ENCODE measurements at regions of chr2 and their contacts with region 1.

Region 1: DNA sequence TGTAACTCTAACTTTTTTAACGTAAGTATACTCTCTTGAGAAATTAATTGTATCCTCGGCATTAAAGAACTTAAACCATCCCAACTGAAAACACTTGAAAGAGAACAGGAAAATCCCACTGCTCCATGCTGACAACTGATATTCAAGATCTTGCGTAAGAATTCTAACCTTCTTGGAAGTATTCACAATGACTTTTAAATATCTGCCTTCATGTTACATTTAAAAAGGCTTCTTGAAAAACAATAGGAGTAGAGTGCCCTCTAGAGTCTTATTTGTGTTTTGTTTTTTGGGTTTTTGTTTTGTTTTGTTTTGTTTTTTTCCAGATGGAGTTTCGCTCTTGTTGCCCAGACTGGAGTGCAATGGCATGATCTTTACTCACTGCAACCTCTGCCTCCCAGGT is 65.4 kb upstream of the DNAJC10 start:
- DNase-seq: no peak
- H3K4me3 ChIP-seq: no peak overlapping the region
- H3K27ac ChIP-seq: no peak overlapping the region
- H3K4me1 ChIP-seq: peaks cover 0 to 3% (median 0%) of the 10 kb centered on the region in 4 experiments; a peak in 1 of 7 replicates
- H3K27me3 ChIP-seq: no peaks in the 10 kb centered on the region
- CTCF ChIP-seq: peak in 2 of 3 experiments; percentile 27 to 29; a peak in 2 of 4 replicates
- EP300 ChIP-seq: no peak
- POLR2A ChIP-seq: no peak
- RAD21 ChIP-seq: peak; percentile 60 to 61

Region 2: DNA sequence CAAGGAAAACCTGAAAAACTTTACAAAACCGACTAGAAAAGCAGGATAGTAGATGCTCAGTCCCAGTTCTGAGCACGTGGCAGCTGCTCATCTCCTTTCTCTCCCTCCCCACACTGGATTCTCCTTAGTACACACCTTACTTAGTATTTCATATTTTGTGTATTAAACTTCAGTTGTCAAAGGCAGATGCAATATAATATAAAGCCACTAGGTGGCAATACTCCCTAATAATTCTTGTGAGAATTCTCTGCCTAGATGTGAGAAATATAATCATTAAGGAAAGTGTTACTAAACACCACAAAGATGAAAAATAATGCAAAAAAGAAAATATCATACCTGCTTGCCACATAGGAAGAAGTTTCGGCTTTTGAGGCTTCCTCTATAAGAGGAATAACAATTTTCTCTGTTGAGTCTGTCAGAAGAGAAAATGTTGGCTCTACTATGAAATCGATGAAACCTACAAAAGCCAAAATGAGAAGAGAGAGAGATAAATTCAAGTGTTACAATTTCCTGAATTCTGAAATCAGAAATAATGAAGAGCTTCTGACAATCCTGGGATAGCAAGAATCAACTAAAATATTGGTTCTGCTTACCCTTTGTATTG is 464.5 kb before region 1 on chr2:
- CTCF ChIA-PET with region 1: interaction called, 93 read pairs
- POLR2A ChIA-PET with region 1: no interaction called
- DNase-seq: no peak
- H3K4me3 ChIP-seq: no peak overlapping the region
- H3K27ac ChIP-seq: no peak overlapping the region
- H3K4me1 ChIP-seq: no peaks in the 10 kb centered on the region
- H3K27me3 ChIP-seq: no peaks in the 10 kb centered on the region
- CTCF ChIP-seq: peak in 2 of 3 experiments; percentile 27 to 37; a peak in 2 of 4 replicates
- EP300 ChIP-seq: no peak
- POLR2A ChIP-seq: no peak
- RAD21 ChIP-seq: peak; percentile 65 to 81

Region 3: DNA sequence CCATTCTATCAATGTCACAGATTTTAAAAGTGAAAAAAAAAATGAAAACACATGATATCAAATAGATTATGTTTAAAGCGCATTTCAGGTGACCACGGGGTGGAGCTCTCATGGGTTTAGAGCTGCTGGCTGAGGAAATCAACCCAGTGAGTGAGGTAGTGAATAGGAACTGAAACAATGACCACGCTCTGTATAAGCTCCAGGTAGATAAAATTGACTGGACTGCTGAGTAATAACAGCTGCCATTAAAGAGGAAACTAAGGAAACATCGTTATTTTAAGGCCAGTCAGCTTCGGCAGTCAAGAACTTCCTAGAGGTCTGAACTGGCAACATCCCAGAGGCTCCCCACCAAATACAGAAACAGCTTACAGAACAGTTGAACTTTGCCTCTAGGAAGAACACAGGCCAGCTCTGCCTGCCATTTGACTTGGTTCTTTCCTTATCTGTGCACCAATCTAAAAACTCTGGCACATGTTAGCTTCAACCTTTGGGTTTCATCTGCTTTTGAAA is 409.8 kb before region 1 on chr2:
- CTCF ChIA-PET with region 1: interaction called, 38 read pairs
- POLR2A ChIA-PET with region 1: no interaction called
- DNase-seq: peak in 1 of 2 experiments; percentile 10
- H3K4me3 ChIP-seq: no peak overlapping the region
- H3K27ac ChIP-seq: no peak overlapping the region
- H3K4me1 ChIP-seq: peaks cover 2 to 8% (median 5%) of the 10 kb centered on the region in 4 experiments; a peak in 3 of 7 replicates
- H3K27me3 ChIP-seq: no peaks in the 10 kb centered on the region
- CTCF ChIP-seq: peak; percentile 38 to 52 (median 51)
- EP300 ChIP-seq: no peak
- POLR2A ChIP-seq: no peak
- RAD21 ChIP-seq: peak; percentile 56 to 57

Region 4: GRCh38 chr2:182559623-182560022 is 91.1 kb before region 1 on chr2:
- CTCF ChIA-PET with region 1: no interaction called
- POLR2A ChIA-PET with region 1: no interaction called
- DNase-seq: no peak
- H3K4me3 ChIP-seq: no peak overlapping the region
- H3K27ac ChIP-seq: no peak overlapping the region
- H3K4me1 ChIP-seq: no peaks in the 10 kb centered on the region
- H3K27me3 ChIP-seq: no peaks in the 10 kb centered on the region
- CTCF ChIP-seq: no peak
- EP300 ChIP-seq: no peak
- POLR2A ChIP-seq: no peak
- RAD21 ChIP-seq: no peak

Region 5: DNA sequence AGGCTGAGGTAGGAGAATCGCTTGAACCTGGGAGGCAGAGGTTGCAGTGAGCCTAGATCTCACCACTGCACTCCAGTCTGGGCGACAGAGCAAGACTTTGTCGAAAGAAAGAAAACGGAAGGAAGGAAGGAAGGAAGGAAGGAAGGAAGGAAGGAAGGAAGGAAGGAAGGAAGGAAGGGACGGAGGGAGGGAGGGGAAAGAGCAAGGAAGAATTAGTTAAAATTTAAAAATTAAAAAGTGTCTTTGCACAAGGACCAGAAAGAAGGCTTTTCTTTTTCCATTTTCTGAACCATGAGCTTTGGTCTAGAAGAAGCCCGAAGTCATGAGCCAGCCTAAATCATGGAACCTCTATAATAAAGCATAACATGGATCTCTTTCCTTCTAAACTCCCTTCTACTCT is 72.9 kb before region 1 on chr2:
- CTCF ChIA-PET with region 1: interaction called, 10 read pairs
- POLR2A ChIA-PET with region 1: no interaction called
- DNase-seq: no peak
- H3K4me3 ChIP-seq: no peak overlapping the region
- H3K27ac ChIP-seq: no peak overlapping the region
- H3K4me1 ChIP-seq: no peaks in the 10 kb centered on the region
- H3K27me3 ChIP-seq: no peaks in the 10 kb centered on the region
- CTCF ChIP-seq: no peak
- EP300 ChIP-seq: no peak
- POLR2A ChIP-seq: no peak
- RAD21 ChIP-seq: no peak

Region 6: DNA sequence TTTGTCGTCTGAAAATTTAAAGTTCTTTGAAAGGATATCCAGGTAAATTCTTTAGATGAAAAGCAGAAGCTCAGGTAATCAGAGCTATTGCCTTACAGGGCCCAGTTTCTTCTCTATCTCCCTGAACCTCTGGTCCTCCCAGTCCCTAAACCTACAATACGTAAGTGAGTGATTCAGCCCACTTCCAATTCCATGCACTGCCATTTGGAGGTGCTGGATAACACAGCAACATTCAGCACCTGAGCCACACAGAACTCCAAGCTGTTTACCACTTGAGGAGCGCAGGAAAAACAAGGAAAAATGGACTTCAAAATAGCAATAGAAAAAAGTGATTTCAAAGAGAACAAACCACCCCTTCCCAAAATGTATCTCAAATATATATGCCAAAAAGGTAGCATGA is 39.7 kb before region 1 on chr2:
- CTCF ChIA-PET with region 1: interaction called, 17 read pairs
- POLR2A ChIA-PET with region 1: no interaction called
- DNase-seq: peak in 1 of 2 experiments; percentile 19
- H3K4me3 ChIP-seq: no peak overlapping the region
- H3K27ac ChIP-seq: no peak overlapping the region
- H3K4me1 ChIP-seq: no peaks in the 10 kb centered on the region
- H3K27me3 ChIP-seq: no peaks in the 10 kb centered on the region
- CTCF ChIP-seq: peak; percentile 21 to 51 (median 34)
- EP300 ChIP-seq: no peak
- POLR2A ChIP-seq: no peak
- RAD21 ChIP-seq: peak; percentile 44 to 67

Region 7: GRCh38 chr2:182636695-182637094 is 14.0 kb before region 1 on chr2:
- CTCF ChIA-PET with region 1: interaction called, 30 read pairs
- POLR2A ChIA-PET with region 1: no interaction called
- DNase-seq: no peak
- H3K4me3 ChIP-seq: no peak overlapping the region
- H3K27ac ChIP-seq: no peak overlapping the region
- H3K4me1 ChIP-seq: peaks cover 0 to 4% (median 0%) of the 10 kb centered on the region in 4 experiments; a peak in 1 of 7 replicates
- H3K27me3 ChIP-seq: no peaks in the 10 kb centered on the region
- CTCF ChIP-seq: no peak
- EP300 ChIP-seq: no peak
- POLR2A ChIP-seq: no peak
- RAD21 ChIP-seq: no peak

Measured in H1 (cell line).